Activated CD4-positive, alpha-beta memory T cell treated with anti-CD3 and anti-CD28 coated beads for 36 hours (primary cell): ENCODE measurements at regions of chr7 and their contacts with region 1.

Region 1: DNA sequence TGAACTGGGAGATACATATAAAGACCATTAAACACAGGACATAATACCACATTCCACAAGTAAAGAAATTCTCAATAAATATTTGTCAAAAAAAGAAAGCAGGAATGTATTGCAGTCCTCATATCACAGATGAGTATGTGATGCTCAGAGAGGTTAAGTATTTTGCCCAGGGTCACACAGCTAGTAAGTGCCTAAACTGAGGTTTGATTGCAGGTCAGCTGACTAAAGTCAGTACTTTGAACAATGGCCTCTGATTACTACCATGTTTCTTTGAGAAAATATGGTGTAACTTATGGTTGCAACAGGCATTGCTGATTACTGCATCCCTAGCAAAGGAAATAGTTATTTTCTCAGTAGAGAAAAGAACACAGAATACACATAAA is 267.1 kb downstream of the ELMO1 start:
- DNase-seq: no peak
- H3K4me3 Mint-ChIP-seq: no peak overlapping the region
- H3K27ac Mint-ChIP-seq: no peak overlapping the region
- H3K4me1 Mint-ChIP-seq: peaks cover 5% of the 10 kb centered on the region
- H3K27me3 Mint-ChIP-seq: no peaks in the 10 kb centered on the region

Region 2: GRCh38 chr7:36473454-36474282 is 707.9 kb before region 1 on chr7:
- CTCF ChIA-PET with region 1: interaction called, 13 read pairs
- POLR2A ChIA-PET with region 1: no interaction called
- intact Hi-C with region 1: no loop called
- DNase-seq: peak; percentile 57
- H3K4me3 Mint-ChIP-seq: no peak overlapping the region
- H3K27ac Mint-ChIP-seq: no peak overlapping the region
- H3K4me1 Mint-ChIP-seq: peaks cover 15% of the 10 kb centered on the region
- H3K27me3 Mint-ChIP-seq: no peaks in the 10 kb centered on the region

Region 3: DNA sequence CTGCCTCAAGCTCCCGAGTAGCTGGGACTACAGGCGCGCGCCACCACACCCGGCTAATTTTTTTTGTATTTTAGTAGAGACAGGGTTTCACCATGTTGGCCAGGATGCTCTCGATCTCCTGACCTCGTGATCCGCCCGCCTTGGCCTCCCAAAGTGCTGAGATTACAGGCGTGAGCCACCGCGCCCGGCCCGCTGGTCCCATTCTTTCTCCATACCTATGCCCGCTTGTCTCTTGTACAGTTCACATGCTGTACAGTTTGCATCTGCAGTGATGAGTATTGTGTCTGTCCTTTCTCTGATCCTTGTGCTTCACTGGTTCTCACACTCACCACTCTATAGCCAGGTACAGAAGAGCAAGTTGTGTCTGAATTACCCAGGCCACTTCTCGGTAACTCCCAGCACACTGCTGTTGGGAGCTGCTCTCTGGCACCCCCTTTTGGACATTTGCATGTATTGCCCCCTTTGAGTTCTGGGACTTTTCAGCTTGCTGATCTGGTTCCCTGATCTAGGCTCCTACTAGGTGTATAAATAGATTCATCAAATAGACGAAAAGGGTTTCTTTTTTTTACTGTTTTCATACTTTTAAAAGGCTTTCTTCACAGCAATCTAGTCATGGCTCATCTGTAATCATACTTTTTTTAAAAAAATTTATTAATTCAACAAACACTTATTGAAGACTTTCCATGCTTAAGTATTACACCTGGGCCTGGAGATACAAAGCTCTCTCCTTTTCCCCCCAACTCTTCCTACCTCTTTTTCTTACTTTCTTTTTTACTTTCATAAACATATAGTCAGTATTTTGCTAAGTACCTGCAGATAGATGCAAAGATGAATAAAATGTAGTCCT is 510.7 kb before region 1 on chr7:
- CTCF ChIA-PET with region 1: interaction called, 29 read pairs
- POLR2A ChIA-PET with region 1: no interaction called
- intact Hi-C with region 1: loop called (anchors 5 kb)
- DNase-seq: peak; percentile 81
- H3K4me3 Mint-ChIP-seq: no peak overlapping the region
- H3K27ac Mint-ChIP-seq: no peak overlapping the region
- H3K4me1 Mint-ChIP-seq: peaks cover 34% of the 10 kb centered on the region
- H3K27me3 Mint-ChIP-seq: peaks cover 2% of the 10 kb centered on the region

Region 4: DNA sequence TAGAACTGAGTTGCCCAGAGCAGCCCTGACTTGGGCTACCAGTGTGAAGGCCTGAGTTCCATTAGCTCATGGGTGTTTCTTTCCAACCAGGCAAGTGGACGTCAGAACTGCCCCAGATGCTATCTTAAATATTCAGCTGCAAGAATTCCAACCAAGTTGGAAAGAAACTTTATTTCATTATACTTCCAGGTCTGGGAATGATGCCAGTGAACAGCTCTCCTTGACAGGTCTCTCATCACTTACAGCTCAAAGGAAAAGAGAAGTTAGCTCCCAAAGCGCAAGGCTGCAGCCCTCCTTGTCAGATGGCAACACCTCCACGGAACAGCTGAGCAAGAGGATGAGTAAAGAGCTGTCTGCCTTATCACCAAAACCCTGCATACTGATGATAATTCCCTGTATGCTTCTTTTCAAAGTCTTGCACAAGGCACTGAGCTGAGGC is 201.7 kb before region 1 on chr7:
- CTCF ChIA-PET with region 1: interaction called, 112 read pairs
- POLR2A ChIA-PET with region 1: no interaction called
- intact Hi-C with region 1: no loop called
- DNase-seq: no peak
- H3K4me3 Mint-ChIP-seq: no peak overlapping the region
- H3K27ac Mint-ChIP-seq: no peak overlapping the region
- H3K4me1 Mint-ChIP-seq: peaks cover 5% of the 10 kb centered on the region
- H3K27me3 Mint-ChIP-seq: no peaks in the 10 kb centered on the region

Region 5: DNA sequence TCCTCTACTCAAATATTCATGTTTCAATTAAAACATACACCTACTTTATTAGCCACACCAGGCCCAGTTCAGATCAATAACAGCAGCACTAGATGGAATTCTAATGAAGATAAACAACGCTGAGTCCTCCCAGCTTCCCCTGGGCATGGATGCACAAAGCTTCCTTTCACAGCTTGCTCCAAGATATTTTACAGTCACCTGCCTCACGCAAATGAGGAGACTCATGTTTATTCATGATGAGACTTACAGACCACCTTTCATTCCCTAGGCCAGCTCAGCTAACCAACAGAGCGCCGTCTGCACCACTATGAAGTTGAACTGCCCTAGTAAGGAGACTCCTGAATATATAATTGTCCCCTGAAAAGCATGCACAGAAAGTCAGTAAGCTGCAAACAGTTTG is 174.3 kb before region 1 on chr7:
- CTCF ChIA-PET with region 1: interaction called, 10 read pairs
- POLR2A ChIA-PET with region 1: no interaction called
- intact Hi-C with region 1: no loop called
- DNase-seq: no peak
- H3K4me3 Mint-ChIP-seq: no peak overlapping the region
- H3K27ac Mint-ChIP-seq: no peak overlapping the region
- H3K4me1 Mint-ChIP-seq: no peaks in the 10 kb centered on the region
- H3K27me3 Mint-ChIP-seq: no peaks in the 10 kb centered on the region

Region 6: DNA sequence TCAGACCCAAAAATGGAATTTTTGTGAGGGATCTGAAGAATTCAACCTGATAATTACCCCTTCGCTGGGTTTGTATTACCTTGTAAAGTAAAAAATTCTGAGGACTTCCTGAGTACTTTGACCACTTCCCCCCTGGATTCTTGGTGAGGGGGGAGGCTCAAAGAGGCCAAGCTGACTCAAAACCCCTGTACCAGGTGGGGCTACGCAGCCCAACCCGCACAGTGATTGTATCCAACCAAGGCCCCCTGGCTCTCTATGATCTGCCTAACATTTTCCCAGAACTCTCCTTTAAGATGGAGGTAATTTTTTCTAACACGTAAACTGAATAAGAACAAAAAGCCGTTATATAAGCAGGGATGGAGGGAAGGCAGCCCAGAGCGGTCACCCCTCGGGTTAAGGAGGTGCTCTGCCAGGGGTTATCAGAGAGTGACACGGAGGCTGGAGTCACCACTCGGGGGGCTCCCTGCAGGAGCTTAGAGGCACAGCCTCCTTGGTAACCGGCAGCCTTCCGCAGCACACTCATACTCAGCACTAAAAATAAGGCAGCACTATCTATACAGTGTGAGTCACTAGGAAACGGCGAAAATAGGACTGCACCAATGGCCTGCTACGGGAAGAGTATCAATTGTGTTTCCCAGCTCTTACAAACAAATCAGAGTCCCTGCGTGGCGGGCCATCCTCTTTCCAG is 11.7 kb after region 1 on chr7:
- CTCF ChIA-PET with region 1: interaction called, 15 read pairs
- POLR2A ChIA-PET with region 1: no interaction called
- intact Hi-C with region 1: no loop called
- DNase-seq: no peak
- H3K4me3 Mint-ChIP-seq: no peak overlapping the region
- H3K27ac Mint-ChIP-seq: no peak overlapping the region
- H3K4me1 Mint-ChIP-seq: no peaks in the 10 kb centered on the region
- H3K27me3 Mint-ChIP-seq: no peaks in the 10 kb centered on the region

Region 7: GRCh38 chr7:37336259-37336658 is 154.7 kb after region 1 on chr7:
- CTCF ChIA-PET with region 1: no interaction called
- POLR2A ChIA-PET with region 1: no interaction called
- intact Hi-C with region 1: no loop called
- DNase-seq: peak; percentile 71
- H3K4me3 Mint-ChIP-seq: peak overlapping the region; percentile 17
- H3K27ac Mint-ChIP-seq: peak overlapping the region; percentile 76
- H3K4me1 Mint-ChIP-seq: peaks cover 89% of the 10 kb centered on the region
- H3K27me3 Mint-ChIP-seq: no peaks in the 10 kb centered on the region